Natural killer cell (primary cell): ENCODE measurements at regions of chr18 and their contacts with region 1.

Region 1: GRCh38 chr18:58671111-58671631 is at the start of gene MALT1:
- DNase-seq: peak; percentile 94 to 95
- ATAC-seq: peak; percentile 89 to 98 (median 90)
- H3K4me3 ChIP-seq: peak within 1 kb of the TSS; percentile 60
- H3K4me3 Mint-ChIP-seq: peak within 1 kb of the TSS; percentile 94
- H3K27ac ChIP-seq: peak within 1 kb of the TSS; percentile 76
- H3K27ac Mint-ChIP-seq: peak within 1 kb of the TSS; percentile 88 to 94
- H3K4me1 ChIP-seq: peaks cover 19% of the 10 kb centered on the region
- H3K4me1 Mint-ChIP-seq: peaks cover 32 to 33% of the 10 kb centered on the region in 2 donors
- H3K27me3 ChIP-seq: no peaks in the 10 kb centered on the region
- H3K27me3 Mint-ChIP-seq: no peaks in the 10 kb centered on the region
- CTCF ChIP-seq: no peak
- total RNA-seq, gene MALT1: 49.8 to 55.8 (median 54.5) TPM

Region 2: GRCh38 chr18:58615140-58616132 is 55.7 kb before region 1 on chr18:
- intact Hi-C with region 1: loop called (anchors 1 kb)
- DNase-seq: peak; percentile 38 to 76
- ATAC-seq: peak; percentile 91 to 96 (median 96)
- H3K4me3 ChIP-seq: no peak overlapping the region
- H3K4me3 Mint-ChIP-seq: peak overlapping the region; percentile 79
- H3K27ac ChIP-seq: peak overlapping the region; percentile 82
- H3K27ac Mint-ChIP-seq: peak overlapping the region; percentile 90 to 95
- H3K4me1 ChIP-seq: peaks cover 25% of the 10 kb centered on the region
- H3K4me1 Mint-ChIP-seq: peaks cover 16 to 27% of the 10 kb centered on the region in 2 donors
- H3K27me3 ChIP-seq: no peaks in the 10 kb centered on the region
- H3K27me3 Mint-ChIP-seq: no peaks in the 10 kb centered on the region
- CTCF ChIP-seq: no peak

Region 3: DNA sequence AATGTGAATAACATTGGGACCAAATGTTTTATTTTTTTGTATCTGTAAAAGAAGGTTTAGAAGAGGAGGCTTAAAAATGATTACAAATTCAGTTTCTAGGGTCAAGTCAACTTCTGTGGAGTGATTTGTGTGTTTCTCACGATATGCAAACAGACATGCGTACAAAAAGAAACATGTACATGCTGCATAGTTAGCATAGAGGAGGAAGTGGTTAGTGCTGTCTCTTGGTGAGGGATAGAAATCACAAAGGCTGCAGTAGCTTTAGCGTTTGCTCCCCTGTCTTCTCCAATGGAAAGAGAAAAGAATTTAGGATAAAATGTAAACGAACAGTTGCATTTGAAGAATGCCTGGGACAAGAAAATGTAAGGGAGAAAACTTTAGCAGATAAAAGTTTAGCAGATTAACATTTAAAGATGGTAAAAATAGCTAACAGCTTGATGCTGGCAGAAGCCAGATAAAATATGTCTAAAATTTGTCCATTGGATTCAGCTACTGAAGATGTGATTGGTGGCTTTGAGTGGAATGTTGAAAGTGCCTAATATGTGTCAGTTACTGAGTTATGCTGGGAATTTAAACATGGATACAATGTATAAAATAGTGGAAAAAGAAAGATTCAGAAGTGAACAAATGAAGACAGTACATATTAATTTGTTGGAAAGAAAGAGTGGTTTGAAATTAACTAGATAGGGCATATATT is 45.0 kb after region 1 on chr18:
- intact Hi-C with region 1: loop called (anchors 5 kb)
- DNase-seq: peak in 1 of 2 donors; percentile 70
- ATAC-seq: peak; percentile 86 to 90 (median 86)
- H3K4me3 ChIP-seq: no peak overlapping the region
- H3K4me3 Mint-ChIP-seq: peak overlapping the region; percentile 88
- H3K27ac ChIP-seq: peak overlapping the region; percentile 64
- H3K27ac Mint-ChIP-seq: peak overlapping the region; percentile 86 to 92
- H3K4me1 ChIP-seq: peaks cover 3% of the 10 kb centered on the region
- H3K4me1 Mint-ChIP-seq: peaks cover 30 to 34% of the 10 kb centered on the region in 2 donors
- H3K27me3 ChIP-seq: no peaks in the 10 kb centered on the region
- H3K27me3 Mint-ChIP-seq: no peaks in the 10 kb centered on the region
- CTCF ChIP-seq: no peak

Region 4: GRCh38 chr18:58726671-58727070 is 55.5 kb after region 1 on chr18:
- intact Hi-C with region 1: no loop called
- DNase-seq: no peak
- ATAC-seq: no peak
- H3K4me3 ChIP-seq: no peak overlapping the region
- H3K4me3 Mint-ChIP-seq: no peak overlapping the region
- H3K27ac ChIP-seq: no peak overlapping the region
- H3K27ac Mint-ChIP-seq: no peak overlapping the region
- H3K4me1 ChIP-seq: peaks cover 2% of the 10 kb centered on the region
- H3K4me1 Mint-ChIP-seq: peaks cover 8 to 13% of the 10 kb centered on the region in 2 donors
- H3K27me3 ChIP-seq: no peaks in the 10 kb centered on the region
- H3K27me3 Mint-ChIP-seq: no peaks in the 10 kb centered on the region
- CTCF ChIP-seq: no peak

Region 5: DNA sequence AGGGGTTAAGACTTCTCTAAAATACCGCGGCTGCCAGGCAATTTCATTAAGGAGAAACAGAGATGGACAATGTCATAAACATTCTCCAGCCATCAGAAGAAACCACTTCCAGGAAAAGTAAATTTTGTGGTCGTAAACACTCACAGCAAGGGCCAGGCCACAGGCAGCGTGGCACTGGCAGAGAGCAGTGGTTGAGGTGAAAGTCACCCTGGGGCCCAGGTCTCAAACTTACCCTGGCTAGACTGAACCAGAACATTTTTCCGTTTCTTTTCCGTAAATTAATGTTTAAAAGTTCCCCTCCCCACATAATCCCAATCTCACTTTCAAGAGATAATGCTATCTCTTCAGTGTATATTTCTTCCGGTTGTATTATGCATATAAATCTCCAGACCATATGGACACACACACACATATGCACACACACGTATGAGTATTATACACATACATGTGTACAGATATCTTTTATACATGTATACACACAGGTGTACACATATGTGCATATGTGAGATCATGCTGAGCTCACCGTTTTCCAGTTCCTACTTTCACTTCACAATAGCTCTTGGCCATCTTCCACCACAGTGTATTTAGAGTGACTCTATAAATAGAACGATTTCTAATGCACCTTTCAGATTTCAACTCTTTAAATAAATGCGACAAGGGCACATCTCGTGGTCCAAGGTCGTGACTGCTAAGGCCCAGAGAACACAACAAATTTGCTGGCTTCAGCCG is 90.2 kb after region 1 on chr18:
- intact Hi-C with region 1: loop called (anchors 5 kb)
- DNase-seq: no peak
- ATAC-seq: peak in 1 of 3 donors; percentile 47
- H3K4me3 ChIP-seq: no peak overlapping the region
- H3K4me3 Mint-ChIP-seq: no peak overlapping the region
- H3K27ac ChIP-seq: no peak overlapping the region
- H3K27ac Mint-ChIP-seq: no peak overlapping the region
- H3K4me1 ChIP-seq: peaks cover 21% of the 10 kb centered on the region
- H3K4me1 Mint-ChIP-seq: peaks cover 11% of the 10 kb centered on the region in 2 donors
- H3K27me3 ChIP-seq: no peaks in the 10 kb centered on the region
- H3K27me3 Mint-ChIP-seq: peaks cover 14 to 17% of the 10 kb centered on the region in 2 donors
- CTCF ChIP-seq: no peak